ENCODE measurements at regions of chr9 and their contacts with region 1.

Region 1: GRCh38 chr9:272251-273213 is 57.9 kb downstream of the DOCK8 start:
- DNase-seq: peak; percentile 83
- H3K4me3 Mint-ChIP-seq: peak overlapping the region; percentile 86
- H3K27ac Mint-ChIP-seq: peak overlapping the region; percentile 100
- H3K4me1 Mint-ChIP-seq: peaks cover 64% of the 10 kb centered on the region
- H3K27me3 Mint-ChIP-seq: no peaks in the 10 kb centered on the region

Region 2: GRCh38 chr9:214648-215493 is 57.7 kb before region 1 on chr9 and contains the start of gene DOCK8:
- CTCF ChIA-PET with region 1: interaction called, 7 read pairs
- POLR2A ChIA-PET with region 1: interaction called, 34 read pairs
- intact Hi-C with region 1: loop called (anchors 1 kb)
- DNase-seq: peak; percentile 71
- H3K4me3 Mint-ChIP-seq: peak within 1 kb of the TSS; percentile 80
- H3K27ac Mint-ChIP-seq: peak within 1 kb of the TSS; percentile 66
- H3K4me1 Mint-ChIP-seq: peaks cover 15% of the 10 kb centered on the region
- H3K27me3 Mint-ChIP-seq: no peaks in the 10 kb centered on the region
- total RNA-seq, gene DOCK8: 140 to 141 TPM

Region 3: DNA sequence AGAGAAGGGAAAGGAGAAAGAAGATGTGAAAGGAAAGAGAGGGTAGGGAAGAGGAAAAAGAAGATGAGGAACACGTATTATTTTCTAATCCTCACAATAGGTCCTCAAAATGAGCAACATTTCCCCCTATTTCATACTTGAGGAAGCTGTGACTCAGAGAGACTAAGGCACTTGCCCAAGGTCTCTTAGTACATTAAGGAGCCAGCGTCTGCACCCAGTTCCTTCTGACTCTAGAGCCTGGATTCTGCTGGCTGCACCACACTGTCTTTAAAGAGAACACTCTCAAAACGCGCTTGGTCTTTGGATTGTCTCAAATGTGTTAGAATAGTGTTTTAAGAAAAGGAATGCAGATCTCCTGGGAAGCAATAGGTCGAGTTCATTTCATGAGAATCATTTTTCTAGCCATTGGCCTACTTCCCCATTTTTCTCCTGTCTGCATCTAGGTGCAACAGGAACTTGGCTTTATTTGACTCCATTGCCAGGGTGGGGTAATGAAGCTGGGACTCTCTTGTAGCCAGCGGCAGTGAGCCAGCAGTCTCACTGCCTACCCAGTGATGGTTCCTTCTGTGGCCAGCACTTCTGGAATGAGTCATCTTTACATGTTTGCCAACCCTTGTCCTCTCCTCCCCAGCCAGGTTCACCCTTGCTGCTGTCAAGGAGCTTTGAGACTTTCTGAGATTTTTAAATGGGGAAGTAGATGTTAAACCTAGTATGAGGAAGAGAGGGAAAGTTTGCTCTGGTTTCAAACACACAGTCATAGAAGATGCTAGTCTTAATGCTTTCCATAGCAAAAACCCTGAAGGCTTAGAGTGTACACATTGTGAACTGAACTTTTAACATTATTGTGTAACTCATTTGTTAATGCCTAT is 24.8 kb after region 1 on chr9:
- CTCF ChIA-PET with region 1: interaction called, 5 read pairs
- POLR2A ChIA-PET with region 1: interaction called, 3 read pairs
- intact Hi-C with region 1: loop called (anchors 1 kb)
- DNase-seq: peak; percentile 45
- H3K4me3 Mint-ChIP-seq: peak overlapping the region; percentile 17
- H3K27ac Mint-ChIP-seq: peak overlapping the region; percentile 64
- H3K4me1 Mint-ChIP-seq: peaks cover 50% of the 10 kb centered on the region
- H3K27me3 Mint-ChIP-seq: no peaks in the 10 kb centered on the region

Region 4: DNA sequence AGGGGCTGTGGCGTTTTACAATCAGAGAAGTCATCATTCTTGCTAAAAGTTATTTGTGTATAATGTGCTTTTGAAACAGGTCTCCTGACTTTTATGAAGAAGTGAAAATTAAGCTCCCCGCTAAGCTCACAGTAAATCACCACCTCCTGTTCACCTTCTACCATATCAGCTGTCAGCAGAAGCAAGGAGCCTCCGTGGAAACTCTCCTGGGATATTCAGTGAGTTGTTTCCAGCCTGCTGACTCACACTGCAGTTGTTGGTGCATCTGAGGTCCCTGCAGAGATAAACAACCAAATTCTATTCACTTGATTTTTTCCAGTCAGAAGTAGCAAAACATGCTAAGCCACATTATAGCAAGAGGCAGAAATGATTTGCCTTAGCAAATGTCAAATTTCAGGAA is 98.8 kb after region 1 on chr9:
- CTCF ChIA-PET with region 1: no interaction called
- POLR2A ChIA-PET with region 1: no interaction called
- intact Hi-C with region 1: no loop called
- DNase-seq: no peak
- H3K4me3 Mint-ChIP-seq: no peak overlapping the region
- H3K27ac Mint-ChIP-seq: no peak overlapping the region
- H3K4me1 Mint-ChIP-seq: no peaks in the 10 kb centered on the region
- H3K27me3 Mint-ChIP-seq: no peaks in the 10 kb centered on the region

Region 5: DNA sequence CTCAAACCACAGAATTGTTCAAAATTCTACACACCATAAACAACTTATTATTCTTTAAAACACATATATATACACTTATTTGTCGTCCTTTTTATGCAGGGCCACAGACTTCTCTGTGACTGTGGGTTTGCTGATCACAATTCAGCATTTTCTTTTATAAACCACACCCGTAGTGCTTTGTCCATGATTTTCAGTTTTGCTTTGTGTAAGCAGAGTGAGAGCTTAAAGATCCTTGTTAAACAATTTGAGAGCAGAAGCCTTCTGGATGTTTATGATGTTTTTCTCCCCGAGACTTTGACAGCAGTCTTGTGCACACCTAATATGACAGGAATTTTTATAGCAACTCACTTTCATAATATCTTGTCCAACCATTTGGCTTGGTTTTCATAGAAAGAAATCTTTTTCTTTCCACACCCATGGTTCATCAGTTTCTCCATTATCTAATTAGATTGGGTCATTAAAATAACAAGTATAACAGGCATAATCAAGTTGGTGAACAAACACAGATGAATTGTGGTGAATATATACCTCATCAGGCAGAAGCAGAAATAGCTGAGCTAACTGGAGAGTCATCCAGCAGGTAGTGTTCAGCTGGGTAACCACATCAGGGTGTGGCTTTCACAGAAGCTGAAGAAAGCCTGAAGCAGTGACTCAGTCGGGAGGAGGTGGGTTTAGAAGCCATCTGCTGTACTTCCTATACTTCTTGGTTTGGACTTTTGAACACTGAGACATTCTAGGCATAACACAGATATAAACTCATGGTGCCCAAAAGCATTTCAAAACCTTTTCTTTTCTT is 174.9 kb after region 1 on chr9:
- CTCF ChIA-PET with region 1: no interaction called
- POLR2A ChIA-PET with region 1: no interaction called
- intact Hi-C with region 1: loop called (anchors 10 kb)
- DNase-seq: peak; percentile 83
- H3K4me3 Mint-ChIP-seq: no peak overlapping the region
- H3K27ac Mint-ChIP-seq: peak overlapping the region; percentile 78
- H3K4me1 Mint-ChIP-seq: peaks cover 27% of the 10 kb centered on the region
- H3K27me3 Mint-ChIP-seq: no peaks in the 10 kb centered on the region

Region 6: DNA sequence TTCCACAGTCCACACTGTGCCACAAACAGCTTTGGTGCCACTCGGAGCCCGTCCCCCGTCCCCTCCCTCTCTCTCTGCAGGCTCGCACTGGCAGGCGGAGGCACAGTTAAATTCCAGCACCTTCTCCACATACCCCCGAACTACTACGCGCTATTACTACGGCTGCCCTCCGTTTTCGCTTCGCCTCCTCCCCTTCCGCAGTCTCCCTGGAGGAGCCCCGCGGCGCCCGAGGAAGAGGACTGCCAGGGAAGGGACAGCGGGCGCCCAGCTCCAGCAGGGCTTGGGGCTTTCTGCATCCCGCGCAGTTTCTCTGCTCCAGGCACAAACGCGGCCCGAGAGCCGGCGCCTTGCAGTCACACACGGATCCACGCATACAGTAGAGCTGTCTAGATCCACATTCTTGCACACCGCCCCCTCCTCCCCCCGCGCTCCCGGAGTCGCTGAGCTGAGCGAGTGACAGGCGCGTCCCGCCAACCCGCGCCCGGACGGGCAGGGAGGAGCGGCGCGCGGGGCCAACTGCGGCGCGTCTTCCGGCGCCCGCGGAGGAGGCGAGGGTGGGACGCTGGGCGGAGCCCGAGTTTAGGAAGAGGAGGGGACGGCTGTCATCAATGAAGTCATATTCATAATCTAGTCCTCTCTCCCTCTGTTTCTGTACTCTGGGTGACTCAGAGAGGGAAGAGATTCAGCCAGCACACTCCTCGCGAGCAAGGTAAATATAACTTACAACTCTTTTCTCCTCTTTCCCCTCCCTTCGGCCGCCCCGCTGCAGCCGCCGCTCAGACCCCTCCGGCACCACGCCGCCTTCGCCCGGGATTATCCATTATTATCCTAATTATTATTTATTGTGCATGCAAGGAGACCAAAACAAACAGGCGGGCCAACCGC is 1742.4 kb after region 1 on chr9 and contains the start of gene SMARCA2:
- CTCF ChIA-PET with region 1: no interaction called
- POLR2A ChIA-PET with region 1: no interaction called
- intact Hi-C with region 1: loop called (anchors 10 kb)
- DNase-seq: peak; percentile 98
- H3K4me3 Mint-ChIP-seq: peak within 1 kb of the TSS; percentile 99
- H3K27ac Mint-ChIP-seq: peak within 1 kb of the TSS; percentile 100
- H3K4me1 Mint-ChIP-seq: peaks cover 47% of the 10 kb centered on the region
- H3K27me3 Mint-ChIP-seq: peaks cover 4% of the 10 kb centered on the region
- total RNA-seq, gene SMARCA2: 95.1 to 100 TPM